Colonic mucosa (tissue), 4 donors: ENCODE measurements at regions of chr20 and their contacts with region 1.

Region 1: GRCh38 chr20:19661717-19662636 is 96.1 kb upstream of the RIN2 start:
- DNase-seq: peak; percentile 66
- H3K4me3 ChIP-seq: no peak overlapping the region
- H3K27ac ChIP-seq: no peak overlapping the region
- H3K4me1 ChIP-seq: no peaks in the 10 kb centered on the region
- H3K27me3 ChIP-seq: no peaks in the 10 kb centered on the region
- CTCF ChIP-seq: peak; percentile 99

Region 2: GRCh38 chr20:18632196-18633009 is 1029.6 kb before region 1 on chr20:
- intact Hi-C with region 1: loop called (anchors 10 kb)
- DNase-seq: peak; percentile 64
- H3K4me3 ChIP-seq: no peak overlapping the region
- H3K27ac ChIP-seq: no peak overlapping the region
- H3K4me1 ChIP-seq: no peaks in the 10 kb centered on the region
- H3K27me3 ChIP-seq: no peaks in the 10 kb centered on the region
- CTCF ChIP-seq: peak; percentile 85

Region 3: DNA sequence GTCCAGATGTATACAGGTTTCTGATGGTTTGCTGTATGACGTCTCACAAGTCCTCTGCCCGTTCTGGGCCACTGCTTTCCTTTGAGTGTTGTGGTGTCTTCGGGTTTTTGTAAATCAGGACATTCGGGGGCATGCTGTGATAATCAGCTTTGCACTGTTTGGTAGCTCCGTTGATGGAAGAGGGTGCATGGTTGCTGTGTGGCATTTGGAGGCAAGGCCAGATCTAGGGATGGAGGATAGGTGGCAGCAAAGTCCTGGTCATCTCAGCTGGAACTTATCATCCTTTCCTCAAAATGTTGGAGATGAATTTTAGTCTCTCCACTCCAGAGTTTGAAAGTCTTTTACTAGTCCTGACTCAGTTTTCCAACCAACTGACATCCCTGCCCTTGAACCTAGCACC is 757.4 kb before region 1 on chr20:
- intact Hi-C with region 1: loop called (anchors 10 kb)
- DNase-seq: no peak
- H3K4me3 ChIP-seq: no peak overlapping the region
- H3K27ac ChIP-seq: no peak overlapping the region
- H3K4me1 ChIP-seq: no peaks in the 10 kb centered on the region
- H3K27me3 ChIP-seq: no peaks in the 10 kb centered on the region
- CTCF ChIP-seq: no peak

Region 4: GRCh38 chr20:19205977-19206396 is 456.0 kb before region 1 on chr20:
- intact Hi-C with region 1: loop called (anchors 5 kb)
- DNase-seq: peak; percentile 85
- H3K4me3 ChIP-seq: no peak overlapping the region
- H3K27ac ChIP-seq: no peak overlapping the region
- H3K4me1 ChIP-seq: no peaks in the 10 kb centered on the region
- H3K27me3 ChIP-seq: no peaks in the 10 kb centered on the region
- CTCF ChIP-seq: peak; percentile 91

Region 5: DNA sequence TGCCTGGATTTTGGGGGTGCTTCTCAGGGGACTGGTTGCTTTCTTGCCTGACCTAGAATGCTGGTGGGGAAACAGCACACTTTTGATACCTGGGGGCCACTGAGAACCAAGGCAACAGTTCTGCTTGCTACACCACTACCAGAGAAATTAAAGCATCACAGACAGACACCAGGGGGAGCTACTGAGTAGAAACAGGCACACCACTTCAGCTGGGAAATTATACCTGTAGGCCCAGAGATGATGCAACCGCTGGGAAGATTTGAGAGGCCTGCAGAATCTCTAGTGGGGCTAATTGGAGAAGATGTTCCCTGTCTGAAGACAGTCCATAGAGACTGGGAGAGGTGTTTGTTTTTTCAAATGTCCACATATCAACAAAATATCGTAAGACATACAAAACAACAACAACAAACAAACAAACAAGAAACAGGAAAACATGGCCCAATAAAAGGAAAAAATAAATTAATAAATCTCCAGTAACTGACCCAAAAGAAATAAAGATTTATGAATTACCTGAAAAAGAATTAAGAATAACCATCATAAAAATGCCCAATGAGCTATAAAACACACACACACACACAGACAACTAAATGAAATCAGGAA is 33.3 kb before region 1 on chr20:
- intact Hi-C with region 1: loop called (anchors 5 kb)
- DNase-seq: peak; percentile 88
- H3K4me3 ChIP-seq: no peak overlapping the region
- H3K27ac ChIP-seq: no peak overlapping the region
- H3K4me1 ChIP-seq: no peaks in the 10 kb centered on the region
- H3K27me3 ChIP-seq: no peaks in the 10 kb centered on the region
- CTCF ChIP-seq: peak; percentile 52